ENCODE measurements at regions of chr17 and their contacts with region 1.

Region 1: GRCh38 chr17:27315322-27315721 is 21.4 kb downstream of the WSB1 start:
- DNase-seq: peak; percentile 79 to 94
- H3K4me3 ChIP-seq: no peak overlapping the region
- H3K27ac ChIP-seq: peak overlapping the region; percentile 74 to 76
- H3K4me1 ChIP-seq: peaks cover 0 to 16% of the 10 kb centered on the region in 2 donors
- H3K27me3 ChIP-seq: no peaks in the 10 kb centered on the region
- CTCF ChIP-seq: no peak

Region 2: DNA sequence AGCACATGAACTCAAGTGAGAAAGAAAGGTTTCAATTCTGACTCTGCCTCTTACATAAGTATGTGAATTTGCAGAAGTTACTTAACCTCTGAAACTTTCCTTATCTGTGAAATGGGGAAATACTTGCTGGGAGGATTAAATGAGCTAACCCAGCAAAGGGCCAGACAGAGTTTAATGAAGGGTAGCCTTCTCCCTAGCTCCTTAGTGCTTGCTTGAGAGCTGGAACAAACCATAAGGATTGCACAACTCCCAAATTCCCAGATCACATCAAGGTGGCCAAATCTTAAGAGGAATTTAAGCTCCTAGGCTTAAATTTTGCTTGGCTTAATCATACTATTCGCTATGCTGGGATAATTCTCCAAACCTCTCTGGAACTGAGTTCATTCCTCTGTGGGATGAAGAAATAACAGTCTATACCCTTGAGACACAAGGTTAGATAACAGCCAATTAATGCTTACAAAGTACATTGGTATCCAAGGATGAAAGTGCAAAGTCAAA is 33.2 kb before region 1 on chr17:
- intact Hi-C with region 1: no loop called
- DNase-seq: no peak
- H3K4me3 ChIP-seq: no peak overlapping the region
- H3K27ac ChIP-seq: no peak overlapping the region
- H3K4me1 ChIP-seq: no peaks in the 10 kb centered on the region
- H3K27me3 ChIP-seq: no peaks in the 10 kb centered on the region
- CTCF ChIP-seq: no peak

Region 3: DNA sequence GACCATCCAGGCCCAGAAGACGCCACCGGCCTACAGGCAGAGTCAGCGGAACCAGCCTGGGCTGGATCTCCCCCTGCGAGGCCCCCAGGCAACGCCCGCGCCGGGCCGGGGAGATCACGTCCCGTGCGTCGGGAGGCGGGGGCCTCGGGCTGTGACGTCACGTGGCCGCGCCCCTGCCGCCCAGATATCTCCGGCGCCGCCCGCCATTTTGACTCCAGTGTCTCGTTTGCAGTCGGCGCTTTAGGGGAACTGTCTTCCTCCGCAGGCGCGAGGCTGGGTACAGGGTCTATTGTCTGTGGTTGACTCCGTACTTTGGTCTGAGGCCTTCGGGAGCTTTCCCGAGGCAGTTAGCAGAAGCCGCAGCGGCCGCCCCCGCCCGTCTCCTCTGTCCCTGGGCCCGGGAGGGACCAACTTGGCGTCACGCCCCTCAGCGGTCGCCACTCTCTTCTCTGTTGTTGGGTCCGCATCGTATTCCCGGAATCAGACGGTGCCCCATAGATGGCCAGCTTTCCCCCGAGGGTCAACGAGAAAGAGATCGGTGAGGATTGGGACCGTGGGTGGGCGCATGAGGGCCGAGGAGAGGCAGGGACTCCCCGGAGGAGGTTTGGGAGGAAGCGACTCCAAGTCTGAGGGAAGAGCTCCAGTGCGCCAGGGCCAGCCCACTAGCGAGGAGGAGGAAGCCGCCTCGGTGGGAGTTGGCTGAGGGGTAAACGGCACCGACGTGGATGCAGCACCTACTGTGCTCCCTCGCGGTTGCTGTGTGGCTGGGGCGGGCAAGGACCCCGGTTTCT is 21.2 kb before region 1 on chr17 and contains the start of gene WSB1:
- intact Hi-C with region 1: loop called (anchors 1 kb)
- DNase-seq: peak; percentile 78 to 96
- H3K4me3 ChIP-seq: peak within 1 kb of the TSS; percentile 72 to 76
- H3K27ac ChIP-seq: peak within 1 kb of the TSS; percentile 98 to 99
- H3K4me1 ChIP-seq: peaks cover 13 to 28% of the 10 kb centered on the region in 2 donors
- H3K27me3 ChIP-seq: no peaks in the 10 kb centered on the region
- CTCF ChIP-seq: no peak
- total RNA-seq, gene WSB1: 176 TPM

Measured in ascending aorta (tissue), 2 donors.